ENCODE measurements at regions of chr17 and their contacts with region 1.

Region 1: DNA sequence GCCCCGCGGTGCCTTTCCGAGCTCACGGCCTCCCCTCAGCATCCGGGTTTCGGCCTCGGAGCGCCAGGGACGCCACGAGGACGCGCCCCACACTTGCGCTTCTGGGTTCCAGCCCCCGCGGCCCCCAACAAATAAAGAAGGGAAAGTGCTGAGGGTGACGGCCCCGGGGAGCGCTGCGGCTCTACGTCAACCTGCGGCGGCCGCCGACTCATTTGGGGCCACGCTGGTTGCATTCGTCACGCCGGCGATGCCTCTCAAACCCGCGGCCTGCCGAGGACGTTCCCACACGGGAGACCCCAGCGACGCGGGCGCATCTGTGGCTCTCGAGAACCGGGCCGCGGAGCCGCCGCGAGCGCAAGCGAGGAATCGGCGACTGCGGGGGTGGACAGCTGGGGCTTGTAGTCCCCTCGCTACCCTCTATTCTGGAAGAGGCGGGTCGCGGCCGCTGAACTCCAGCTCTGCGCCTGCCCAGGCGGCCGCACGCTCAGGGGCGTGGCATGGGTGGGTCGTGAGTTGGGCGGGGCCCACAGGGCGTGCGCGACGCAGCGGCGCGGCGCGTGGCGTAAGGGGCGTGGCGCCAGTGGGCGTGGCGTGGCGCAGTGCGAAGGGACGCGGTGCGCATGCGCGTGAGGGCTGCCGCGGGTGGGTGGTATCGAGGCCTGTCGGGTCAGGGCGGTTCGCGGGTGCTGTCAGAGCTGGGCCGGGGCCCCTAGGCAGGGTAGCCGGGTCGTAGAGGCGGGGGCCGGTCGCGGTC is at the start of gene AMZ2:
- DNase-seq: peak; percentile 91 to 99 (median 98)
- ATAC-seq: peak; percentile 86 to 88
- H3K4me3 Mint-ChIP-seq: peak within 1 kb of the TSS; percentile 91 to 98 (median 94)
- H3K27ac Mint-ChIP-seq: peak within 1 kb of the TSS; percentile 90 to 99 (median 98)
- H3K4me1 Mint-ChIP-seq: peaks cover 10 to 47% (median 32%) of the 10 kb centered on the region in 4 donors
- H3K27me3 Mint-ChIP-seq: no peaks in the 10 kb centered on the region
- polyA plus RNA-seq, gene AMZ2: 89.0 to 125 (median 94.6) TPM

Region 2: GRCh38 chr17:68101075-68101992 is 146.3 kb before region 1 on chr17:
- POLR2A ChIA-PET with region 1: no interaction called
- DNase-seq: peak; percentile 25 to 79 (median 58)
- ATAC-seq: peak; percentile 63 to 73
- H3K4me3 Mint-ChIP-seq: peak overlapping the region; percentile 89 to 98 (median 94)
- H3K27ac Mint-ChIP-seq: peak overlapping the region; percentile 92 to 97 (median 95)
- H3K4me1 Mint-ChIP-seq: peaks cover 20 to 47% (median 42%) of the 10 kb centered on the region in 4 donors
- H3K27me3 Mint-ChIP-seq: no peaks in the 10 kb centered on the region

Region 3: GRCh38 chr17:68184816-68185436 is 62.7 kb before region 1 on chr17:
- POLR2A ChIA-PET with region 1: interaction called, 19 read pairs
- DNase-seq: peak in 5 of 10 donors; percentile 41 to 63 (median 58)
- ATAC-seq: peak; percentile 76 to 79
- H3K4me3 Mint-ChIP-seq: peak overlapping the region; percentile 45 to 94 (median 64)
- H3K27ac Mint-ChIP-seq: peak overlapping the region; percentile 57 to 94 (median 86)
- H3K4me1 Mint-ChIP-seq: peaks cover 19 to 71% (median 52%) of the 10 kb centered on the region in 4 donors
- H3K27me3 Mint-ChIP-seq: no peaks in the 10 kb centered on the region

Region 4: DNA sequence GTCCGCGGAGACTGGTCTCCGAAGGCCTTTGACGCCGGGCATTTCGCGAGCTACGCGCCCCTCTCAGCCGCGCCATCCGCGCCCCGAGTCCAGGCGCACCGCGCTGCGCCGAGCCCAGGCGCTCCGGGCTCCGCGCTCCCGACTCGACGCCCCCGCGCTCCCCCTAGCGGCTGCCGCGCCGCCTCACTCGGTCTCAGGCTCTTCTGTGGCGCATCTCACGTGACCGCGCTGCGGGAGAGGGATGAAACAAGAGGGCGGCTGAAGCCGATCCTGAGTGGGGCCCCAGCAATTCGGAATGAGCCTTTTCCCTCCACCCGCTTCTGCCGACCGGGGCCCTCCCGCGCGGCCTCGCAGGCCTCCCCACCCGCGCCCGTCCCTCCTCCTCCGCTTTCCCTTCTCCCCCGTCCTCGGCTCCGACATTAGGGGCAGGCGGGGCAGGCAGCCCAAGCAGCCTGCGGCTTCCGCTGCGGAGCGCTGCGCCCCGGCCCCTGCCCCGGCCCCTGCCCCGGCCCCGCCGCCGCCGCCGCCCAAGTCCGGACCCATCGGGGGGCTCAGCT is 42.3 kb before region 1 on chr17:
- POLR2A ChIA-PET with region 1: interaction called, 95 read pairs
- DNase-seq: peak; percentile 81 to 95 (median 92)
- ATAC-seq: peak; percentile 80 to 81
- H3K4me3 Mint-ChIP-seq: peak overlapping the region; percentile 78 to 95 (median 87)
- H3K27ac Mint-ChIP-seq: peak overlapping the region; percentile 43 to 97 (median 91)
- H3K4me1 Mint-ChIP-seq: peaks cover 11 to 43% (median 22%) of the 10 kb centered on the region in 4 donors
- H3K27me3 Mint-ChIP-seq: no peaks in the 10 kb centered on the region

Region 5: DNA sequence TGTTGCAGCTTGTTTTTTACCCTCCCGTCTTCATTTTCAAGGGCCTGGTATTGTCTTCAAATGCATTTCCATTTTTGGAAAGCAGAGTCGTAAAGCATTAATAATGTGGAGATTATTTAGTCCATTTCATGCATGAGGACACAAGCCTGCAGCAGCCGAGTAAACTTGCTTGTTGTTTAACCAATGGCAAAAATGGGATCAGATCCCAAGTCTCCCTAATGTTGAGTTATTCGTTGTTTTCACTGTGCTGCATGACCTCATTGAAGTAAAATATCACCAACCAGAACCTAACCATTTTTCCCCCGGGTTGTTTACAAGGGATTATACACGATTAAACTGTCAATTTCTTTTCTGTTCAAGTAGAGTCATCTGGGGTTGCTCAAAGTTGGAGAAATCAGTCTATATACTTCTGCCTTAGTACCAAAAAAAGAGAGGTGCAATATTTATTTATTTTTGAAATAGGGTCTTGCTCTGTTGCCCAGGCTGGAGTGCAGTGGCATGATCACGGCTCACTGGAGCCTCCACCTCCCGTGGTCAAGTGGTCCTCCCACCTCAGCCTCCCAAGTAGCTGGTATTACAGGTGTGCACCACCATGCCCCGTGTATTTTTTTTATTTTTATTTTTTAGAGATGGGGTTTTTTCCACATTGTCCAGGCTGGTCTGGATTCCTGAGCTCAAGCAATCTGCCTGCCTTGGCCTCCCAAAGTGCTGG is 12.6 kb after region 1 on chr17:
- POLR2A ChIA-PET with region 1: interaction called, 42 read pairs
- DNase-seq: no peak
- ATAC-seq: no peak
- H3K4me3 Mint-ChIP-seq: peak overlapping the region in 3 of 10 donors; percentile 34 to 75 (median 75)
- H3K27ac Mint-ChIP-seq: peak overlapping the region in 9 of 10 donors; percentile 22 to 98 (median 88)
- H3K4me1 Mint-ChIP-seq: peaks cover 25 to 73% (median 59%) of the 10 kb centered on the region in 4 donors
- H3K27me3 Mint-ChIP-seq: no peaks in the 10 kb centered on the region

Region 6: DNA sequence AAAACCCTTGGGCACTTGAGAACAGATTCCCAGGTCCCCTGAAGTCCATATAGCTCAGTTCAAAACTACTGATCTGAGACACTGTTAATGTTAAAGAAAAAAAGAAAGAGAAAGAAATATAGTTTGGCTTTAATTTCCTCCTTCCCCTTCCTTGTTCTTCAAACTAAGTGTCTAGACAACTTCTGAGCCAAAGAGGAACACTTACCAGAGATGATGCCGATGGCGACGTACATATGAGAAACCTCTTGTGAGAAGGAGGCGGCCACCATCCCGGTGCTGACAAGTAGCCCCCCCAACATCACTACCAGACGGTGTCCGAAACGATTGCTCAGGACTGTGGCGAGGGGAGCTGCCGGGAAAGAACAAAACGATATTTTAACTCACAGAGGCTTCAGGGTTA is 26.1 kb after region 1 on chr17:
- POLR2A ChIA-PET with region 1: no interaction called
- DNase-seq: no peak
- ATAC-seq: no peak
- H3K4me3 Mint-ChIP-seq: peak overlapping the region in 1 of 10 donors; percentile 33
- H3K27ac Mint-ChIP-seq: peak overlapping the region in 1 of 10 donors; percentile 87
- H3K4me1 Mint-ChIP-seq: no peaks in the 10 kb centered on the region
- H3K27me3 Mint-ChIP-seq: no peaks in the 10 kb centered on the region

Region 7: GRCh38 chr17:68334401-68334800 is 86.8 kb after region 1 on chr17:
- POLR2A ChIA-PET with region 1: no interaction called
- DNase-seq: no peak
- ATAC-seq: no peak
- H3K4me3 Mint-ChIP-seq: no peak overlapping the region
- H3K27ac Mint-ChIP-seq: no peak overlapping the region
- H3K4me1 Mint-ChIP-seq: peaks cover 4 to 13% (median 6%) of the 10 kb centered on the region in 4 donors
- H3K27me3 Mint-ChIP-seq: no peaks in the 10 kb centered on the region

Region 8: GRCh38 chr17:68435876-68436842 is 188.5 kb after region 1 on chr17:
- POLR2A ChIA-PET with region 1: interaction called, 22 read pairs
- DNase-seq: peak; percentile 64 to 90 (median 82)
- ATAC-seq: peak; percentile 69 to 73
- H3K4me3 Mint-ChIP-seq: peak overlapping the region in 9 of 10 donors; percentile 10 to 81 (median 51)
- H3K27ac Mint-ChIP-seq: peak overlapping the region in 9 of 10 donors; percentile 46 to 87 (median 74)
- H3K4me1 Mint-ChIP-seq: peaks cover 22 to 57% (median 56%) of the 10 kb centered on the region in 4 donors
- H3K27me3 Mint-ChIP-seq: no peaks in the 10 kb centered on the region

Region 9: GRCh38 chr17:68457539-68458259 is 210.1 kb after region 1 on chr17:
- POLR2A ChIA-PET with region 1: interaction called, 24 read pairs
- DNase-seq: peak; percentile 96 to 99 (median 98)
- ATAC-seq: peak; percentile 93
- H3K4me3 Mint-ChIP-seq: peak overlapping the region; percentile 71 to 89 (median 82)
- H3K27ac Mint-ChIP-seq: peak overlapping the region in 9 of 10 donors; percentile 55 to 96 (median 94)
- H3K4me1 Mint-ChIP-seq: peaks cover 15 to 69% (median 49%) of the 10 kb centered on the region in 4 donors
- H3K27me3 Mint-ChIP-seq: peaks cover 0 to 2% (median 0%) of the 10 kb centered on the region in 5 donors

Measured in naive thymus-derived CD8-positive, alpha-beta T cell (primary cell).